ENCODE measurements at regions of chr20 and their contacts with region 1.

Region 1: GRCh38 chr20:35615667-35616464 is at the start of gene SPAG4:
- H3K4me3 Mint-ChIP-seq: peak within 1 kb of the TSS; percentile 89
- H3K27ac Mint-ChIP-seq: peak within 1 kb of the TSS; percentile 94
- H3K4me1 Mint-ChIP-seq: peaks cover 47% of the 10 kb centered on the region
- H3K27me3 Mint-ChIP-seq: peaks cover 48% of the 10 kb centered on the region

Region 2: DNA sequence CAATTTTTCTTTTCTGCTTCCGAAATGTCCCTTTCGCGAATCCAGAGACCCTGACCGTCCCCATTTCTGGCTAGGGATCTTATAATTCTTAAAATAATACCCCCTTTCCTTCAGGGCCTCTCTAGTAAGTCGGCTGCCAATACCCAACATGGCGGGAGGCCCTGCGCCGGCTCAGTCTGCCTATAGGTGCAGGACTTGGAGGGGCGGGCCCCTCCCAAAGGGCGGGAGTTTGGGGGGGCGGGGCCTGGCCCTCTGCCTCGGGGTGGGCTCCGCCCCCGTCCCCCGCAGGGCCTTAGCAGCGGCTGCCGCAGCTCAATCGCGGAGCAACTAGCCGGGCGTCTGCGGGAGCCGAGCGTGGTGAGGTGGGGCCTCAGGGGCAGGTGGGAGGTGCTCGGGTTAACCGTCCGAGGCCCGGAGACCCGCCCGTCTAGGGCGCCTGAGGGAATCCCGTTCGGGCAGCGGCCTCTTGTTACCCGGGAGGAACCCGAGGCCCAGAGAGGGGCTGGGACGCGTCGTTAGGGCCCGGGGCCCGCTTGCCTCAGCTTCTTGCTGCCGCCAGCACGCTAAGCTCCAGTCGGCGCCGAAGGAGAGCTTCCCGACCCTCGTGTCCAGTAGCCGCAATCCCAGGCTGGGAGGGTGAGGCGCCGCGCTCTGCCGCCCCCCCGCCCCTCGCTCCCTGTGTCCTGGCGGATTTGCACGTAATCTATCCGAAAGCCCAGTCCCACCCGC is 160.8 kb before region 1 on chr20 and contains the start of gene CEP250:
- intact Hi-C with region 1: no loop called
- H3K4me3 Mint-ChIP-seq: peak within 1 kb of the TSS; percentile 83
- H3K27ac Mint-ChIP-seq: peak within 1 kb of the TSS; percentile 93
- H3K4me1 Mint-ChIP-seq: peaks cover 24% of the 10 kb centered on the region
- H3K27me3 Mint-ChIP-seq: no peaks in the 10 kb centered on the region

Region 3: DNA sequence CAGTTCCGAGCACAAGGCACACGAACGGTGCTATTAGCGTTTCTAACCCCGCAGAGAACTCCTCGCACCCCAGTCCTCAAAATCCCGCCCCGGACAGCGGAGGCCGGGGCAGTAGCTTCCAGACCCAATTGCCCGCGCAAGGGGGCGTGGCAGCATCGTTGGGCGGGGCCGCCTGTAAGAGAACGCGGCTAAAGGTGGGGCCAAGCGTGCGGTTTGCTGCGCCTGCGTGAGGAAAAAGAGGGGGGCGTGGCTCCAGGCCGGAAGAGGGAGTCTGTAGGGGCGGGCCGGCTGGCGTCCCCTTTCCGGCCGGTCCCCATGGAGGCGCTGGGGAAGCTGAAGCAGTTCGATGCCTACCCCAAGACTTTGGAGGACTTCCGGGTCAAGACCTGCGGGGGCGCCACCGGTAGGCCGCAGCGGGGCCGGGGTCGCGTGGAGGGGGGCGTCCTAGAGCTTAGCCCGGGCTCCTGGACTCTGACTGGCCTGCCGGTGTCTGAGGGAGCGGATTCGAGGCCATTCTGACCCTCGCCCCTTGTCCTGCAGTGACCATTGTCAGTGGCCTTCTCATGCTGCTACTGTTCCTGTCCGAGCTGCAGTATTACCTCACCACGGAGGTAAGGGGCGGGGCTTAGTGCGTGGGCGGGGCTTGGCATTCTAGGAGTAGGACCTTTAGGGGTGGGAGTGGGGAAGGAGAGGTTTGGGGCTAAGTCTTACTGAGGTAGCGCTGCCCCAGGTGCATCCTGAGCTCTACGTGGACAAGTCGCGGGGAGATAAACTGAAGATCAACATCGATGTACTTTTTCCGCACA is 73.9 kb before region 1 on chr20 and contains the start of gene ERGIC3:
- intact Hi-C with region 1: loop called (anchors 1 kb)
- H3K4me3 Mint-ChIP-seq: peak within 1 kb of the TSS; percentile 91
- H3K27ac Mint-ChIP-seq: peak within 1 kb of the TSS; percentile 86
- H3K4me1 Mint-ChIP-seq: peaks cover 5% of the 10 kb centered on the region
- H3K27me3 Mint-ChIP-seq: no peaks in the 10 kb centered on the region

Region 4: DNA sequence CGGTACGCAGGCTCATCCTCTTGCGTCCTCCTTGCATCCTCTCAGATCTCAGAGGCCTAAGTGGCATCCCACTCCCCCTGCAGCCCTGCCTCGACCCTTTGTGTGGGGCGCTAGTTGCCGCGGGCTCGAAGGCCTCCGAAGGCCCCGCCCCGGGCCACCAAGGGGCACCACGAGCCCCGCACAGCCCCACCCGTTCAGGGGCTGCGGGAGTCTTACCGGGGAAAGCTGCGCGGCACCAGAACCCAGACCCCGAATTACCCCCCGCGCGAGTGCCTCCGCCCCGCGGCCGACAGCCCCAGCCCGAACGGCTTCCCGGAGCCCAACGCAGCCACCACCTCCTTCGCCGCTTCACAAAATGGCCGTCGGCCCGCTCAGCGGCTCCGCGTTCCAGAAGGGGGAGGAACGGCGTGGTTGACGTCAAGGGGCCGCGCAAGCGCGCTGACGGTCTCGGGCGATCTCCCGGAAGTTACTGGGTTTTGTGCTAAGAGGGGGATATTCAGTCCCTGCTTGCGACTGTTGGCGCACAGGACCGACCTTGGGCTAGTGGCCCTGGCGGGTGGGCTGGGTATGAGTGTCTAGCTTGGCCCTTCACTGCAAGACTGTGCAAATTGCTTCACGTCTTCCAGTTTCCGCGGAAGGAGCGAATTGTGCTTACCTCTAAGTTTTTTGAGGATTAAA is 48.8 kb after region 1 on chr20 and contains the starts of genes CPNE1 and RBM12:
- intact Hi-C with region 1: loop called (anchors 1 kb)
- H3K4me3 Mint-ChIP-seq: peak within 1 kb of the TSS; percentile 95
- H3K27ac Mint-ChIP-seq: peak within 1 kb of the TSS; percentile 99
- H3K4me1 Mint-ChIP-seq: peaks cover 37% of the 10 kb centered on the region
- H3K27me3 Mint-ChIP-seq: no peaks in the 10 kb centered on the region

Region 5: DNA sequence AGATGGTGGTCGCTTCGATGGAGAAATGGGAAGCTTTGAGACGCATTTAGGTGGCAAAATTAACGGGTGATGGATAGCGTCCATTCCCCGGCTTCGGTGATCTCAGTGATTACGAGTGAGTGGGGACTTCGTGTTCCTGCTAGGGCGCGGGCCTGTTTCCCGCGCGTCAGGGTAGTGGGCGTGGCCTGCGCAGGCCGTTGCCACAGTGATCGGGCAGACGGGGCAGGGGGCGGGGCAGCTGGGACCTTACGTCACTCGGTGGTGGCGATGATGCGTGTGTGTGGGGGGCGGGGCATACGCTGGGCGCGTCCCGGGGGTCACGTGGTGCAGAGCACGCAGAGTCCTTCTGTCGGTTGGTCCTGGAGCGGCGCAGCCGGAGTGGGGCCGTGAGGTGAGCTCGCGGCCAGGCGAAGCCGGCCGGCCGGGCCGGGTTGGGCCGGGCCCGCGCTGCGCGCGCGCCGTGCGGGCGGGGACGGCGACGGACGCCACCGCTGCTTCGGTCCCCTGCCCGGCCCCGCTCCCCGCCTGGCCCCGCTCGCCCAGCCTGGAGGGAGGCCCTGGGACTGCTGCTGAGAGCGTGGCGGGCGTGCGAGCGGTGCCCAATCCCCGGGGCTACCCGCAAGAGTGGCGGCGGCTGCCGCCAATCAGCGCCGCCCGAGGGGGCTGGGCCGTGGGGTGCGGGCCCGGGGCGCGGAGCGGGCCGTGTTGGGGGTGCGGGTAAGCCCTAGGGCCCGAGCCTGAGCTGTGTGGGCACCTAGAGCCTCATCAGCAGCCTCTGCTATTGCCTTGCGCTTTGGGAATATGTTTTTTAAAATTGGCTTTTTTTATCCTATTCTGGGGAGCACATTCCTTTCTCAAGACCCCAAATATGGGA is 156.1 kb after region 1 on chr20 and contains the start of gene PHF20:
- intact Hi-C with region 1: loop called (anchors 2 kb)
- H3K4me3 Mint-ChIP-seq: peak within 1 kb of the TSS; percentile 76
- H3K27ac Mint-ChIP-seq: peak within 1 kb of the TSS; percentile 92
- H3K4me1 Mint-ChIP-seq: peaks cover 61% of the 10 kb centered on the region
- H3K27me3 Mint-ChIP-seq: no peaks in the 10 kb centered on the region

Measured in dendritic cell treated with granulocyte-macrophage colony-stimulating factor and Interleukin-4, amounts not matched to agents 40 ng/mL and 50 ng/mL, for 4 days (primary cell).